Naive thymus-derived CD8-positive, alpha-beta T cell (primary cell): ENCODE measurements at regions of chr16 and their contacts with region 1.

Region 1: DNA sequence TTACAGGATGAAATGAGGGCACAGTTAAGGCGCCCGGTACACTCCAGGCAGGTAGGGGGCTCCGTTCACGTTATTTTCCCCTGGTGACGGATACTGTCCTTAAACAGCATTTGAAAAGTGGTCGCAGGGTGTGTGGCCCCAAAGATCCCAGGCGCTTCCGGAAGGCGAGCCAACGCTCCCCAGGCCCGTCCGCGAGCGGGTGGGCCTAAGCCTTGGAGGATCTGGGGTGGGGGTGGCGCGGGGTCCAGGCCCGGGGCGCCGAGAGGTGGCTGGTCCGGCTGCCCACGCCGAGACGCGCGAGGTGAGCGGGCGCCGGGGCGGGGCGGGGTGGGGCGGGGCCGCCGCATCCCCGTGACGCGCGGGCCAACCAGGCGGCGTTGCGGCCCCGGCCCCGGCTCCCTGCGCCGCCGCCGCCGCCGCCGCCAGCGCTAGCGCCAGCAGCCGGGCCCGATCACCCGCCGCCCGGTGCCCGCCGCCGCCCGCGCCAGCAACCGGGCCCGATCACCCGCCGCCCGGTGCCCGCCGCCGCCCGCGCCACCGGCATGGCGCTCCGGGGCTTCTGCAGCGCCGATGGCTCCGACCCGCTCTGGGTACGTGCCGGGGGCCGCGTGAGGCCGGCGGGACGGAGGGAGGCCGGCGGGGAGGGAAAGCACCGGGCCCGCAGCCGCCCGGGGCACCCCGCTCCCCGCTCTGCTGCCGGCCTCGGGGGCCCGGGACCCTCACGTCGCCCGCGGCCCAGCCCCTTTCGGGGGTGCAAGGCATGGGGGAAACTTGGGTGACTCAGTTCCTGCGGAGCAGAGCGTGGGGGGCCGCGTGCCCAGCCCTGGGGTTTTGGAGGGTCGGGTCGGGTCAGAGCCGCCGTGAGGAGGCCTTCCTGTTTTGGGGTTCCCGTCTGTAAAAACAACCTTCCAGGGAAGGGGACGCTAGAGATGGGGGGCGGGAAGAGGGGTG is at the start of gene ABCC1:
- DNase-seq: peak; percentile 44 to 72 (median 64)
- ATAC-seq: peak; percentile 65 to 69
- H3K4me3 Mint-ChIP-seq: peak within 1 kb of the TSS; percentile 89 to 98 (median 94)
- H3K27ac Mint-ChIP-seq: peak within 1 kb of the TSS; percentile 91 to 99 (median 98)
- H3K4me1 Mint-ChIP-seq: peaks cover 22 to 50% (median 44%) of the 10 kb centered on the region in 4 donors
- H3K27me3 Mint-ChIP-seq: no peaks in the 10 kb centered on the region
- polyA plus RNA-seq, gene ABCC1: 3.7 to 9.0 (median 4.3) TPM

Region 2: DNA sequence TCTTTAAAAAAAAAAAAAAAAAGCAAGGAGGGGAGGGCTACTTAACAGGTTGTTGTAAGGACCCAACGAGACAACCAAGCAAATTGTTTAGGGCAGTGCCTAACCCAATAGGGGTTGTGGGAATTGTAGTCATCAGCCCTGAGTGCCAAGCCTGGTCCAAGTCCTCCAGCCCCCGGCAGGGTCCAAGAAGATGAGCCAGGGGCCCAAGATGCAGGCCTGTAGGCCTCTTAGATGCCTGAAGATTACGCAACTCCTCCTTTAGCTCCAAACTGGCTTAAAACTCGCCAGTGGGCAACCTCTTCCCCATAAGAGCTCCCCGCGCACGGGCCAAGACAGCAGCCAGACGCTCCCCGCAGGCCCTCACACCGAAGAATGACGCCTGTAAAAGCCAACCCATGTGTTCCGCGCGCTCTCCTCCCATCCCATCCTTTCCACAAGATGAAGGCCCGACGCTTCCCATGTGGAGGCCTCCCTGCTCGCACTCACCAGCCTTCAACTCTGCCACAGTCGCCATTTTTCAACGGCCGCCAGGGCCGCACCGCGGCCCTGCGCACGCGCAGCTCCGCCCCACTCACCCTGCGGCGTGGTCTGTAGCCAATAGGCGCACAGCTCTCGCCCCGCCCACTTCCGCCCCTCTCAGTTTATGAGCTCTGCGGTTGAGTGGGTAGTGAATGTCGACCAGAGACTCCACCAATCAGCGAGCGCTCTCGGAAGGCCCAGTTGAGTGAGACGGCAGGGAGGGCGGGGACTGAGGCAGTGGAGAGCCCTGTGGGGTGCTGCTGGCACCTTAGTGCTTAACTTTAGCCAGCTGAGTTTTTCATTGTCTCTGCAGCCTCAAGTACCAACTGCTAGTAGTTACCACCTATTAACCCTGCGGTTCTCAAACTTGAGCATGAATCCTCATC is 61.2 kb before region 1 on chr16 and contains the start of gene CEP20:
- POLR2A ChIA-PET with region 1: interaction called, 14 read pairs
- DNase-seq: peak; percentile 97 to 100 (median 99)
- ATAC-seq: peak; percentile 97 to 98
- H3K4me3 Mint-ChIP-seq: peak within 1 kb of the TSS; percentile 95 to 100 (median 98)
- H3K27ac Mint-ChIP-seq: peak within 1 kb of the TSS; percentile 97 to 100 (median 98)
- H3K4me1 Mint-ChIP-seq: peaks cover 18 to 41% (median 35%) of the 10 kb centered on the region in 4 donors
- H3K27me3 Mint-ChIP-seq: no peaks in the 10 kb centered on the region
- polyA plus RNA-seq, gene CEP20: 26.5 to 32.9 (median 27.9) TPM

Region 3: DNA sequence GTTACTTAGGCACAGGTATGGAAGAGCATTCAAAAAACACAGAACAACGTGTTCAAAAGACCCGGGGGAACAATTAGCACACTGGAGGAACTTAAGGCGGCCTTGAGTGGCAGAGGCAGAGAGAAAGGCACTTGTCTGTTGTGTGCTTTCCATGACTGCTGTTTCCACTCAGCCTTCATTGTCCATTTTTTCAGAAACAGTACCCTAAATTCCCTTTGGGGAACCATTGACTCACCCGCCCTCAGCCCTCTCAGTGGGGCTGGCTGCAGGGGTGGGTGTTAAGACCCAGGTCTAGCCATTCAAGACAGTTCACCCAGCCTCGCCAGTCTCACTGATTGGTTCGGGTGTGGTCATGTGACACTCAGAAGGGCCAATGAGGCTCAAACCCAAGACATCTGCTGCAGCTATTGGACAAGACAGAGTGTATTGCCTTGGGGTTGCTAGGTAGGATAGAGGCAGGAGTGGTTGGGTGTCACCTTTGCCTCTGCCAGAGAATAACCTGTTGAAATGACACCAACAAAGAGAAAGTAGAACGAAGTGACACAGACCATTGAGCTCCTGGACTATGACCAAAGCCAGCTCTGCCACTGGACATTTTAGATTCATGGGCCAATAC is 41.5 kb before region 1 on chr16:
- POLR2A ChIA-PET with region 1: no interaction called
- DNase-seq: peak in 2 of 10 donors; percentile 5 to 13
- ATAC-seq: peak; percentile 63 to 80
- H3K4me3 Mint-ChIP-seq: no peak overlapping the region
- H3K27ac Mint-ChIP-seq: no peak overlapping the region
- H3K4me1 Mint-ChIP-seq: peaks cover 6 to 13% (median 8%) of the 10 kb centered on the region in 4 donors
- H3K27me3 Mint-ChIP-seq: peaks cover 0 to 2% (median 0%) of the 10 kb centered on the region in 5 donors

Region 4: DNA sequence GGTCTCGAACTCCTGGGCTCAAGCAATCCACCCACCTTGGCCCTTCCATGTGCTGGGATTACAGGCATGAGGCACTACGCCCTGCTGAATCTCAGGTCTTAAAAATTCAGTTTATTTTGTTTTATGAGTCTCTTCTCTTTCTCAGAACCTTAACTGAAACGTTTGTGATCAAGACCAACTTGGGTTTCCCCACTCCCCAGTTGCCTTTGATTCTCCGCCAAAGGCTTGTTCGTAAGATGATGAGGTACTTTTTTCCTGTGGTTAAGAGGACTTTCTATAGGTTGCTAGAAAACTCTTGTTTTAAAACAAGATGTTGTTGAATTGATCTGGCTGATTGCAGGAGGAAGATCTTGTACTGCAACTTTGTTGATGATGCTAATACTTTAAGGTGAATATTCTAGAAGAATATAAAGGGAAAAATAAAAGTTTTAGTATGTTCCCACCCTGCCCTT is 11.6 kb after region 1 on chr16:
- POLR2A ChIA-PET with region 1: interaction called, 17 read pairs
- DNase-seq: peak; percentile 40 to 93 (median 82)
- ATAC-seq: peak; percentile 82 to 87
- H3K4me3 Mint-ChIP-seq: peak overlapping the region; percentile 78 to 93 (median 86)
- H3K27ac Mint-ChIP-seq: peak overlapping the region; percentile 91 to 99 (median 97)
- H3K4me1 Mint-ChIP-seq: peaks cover 38 to 86% (median 83%) of the 10 kb centered on the region in 4 donors
- H3K27me3 Mint-ChIP-seq: no peaks in the 10 kb centered on the region

Region 5: DNA sequence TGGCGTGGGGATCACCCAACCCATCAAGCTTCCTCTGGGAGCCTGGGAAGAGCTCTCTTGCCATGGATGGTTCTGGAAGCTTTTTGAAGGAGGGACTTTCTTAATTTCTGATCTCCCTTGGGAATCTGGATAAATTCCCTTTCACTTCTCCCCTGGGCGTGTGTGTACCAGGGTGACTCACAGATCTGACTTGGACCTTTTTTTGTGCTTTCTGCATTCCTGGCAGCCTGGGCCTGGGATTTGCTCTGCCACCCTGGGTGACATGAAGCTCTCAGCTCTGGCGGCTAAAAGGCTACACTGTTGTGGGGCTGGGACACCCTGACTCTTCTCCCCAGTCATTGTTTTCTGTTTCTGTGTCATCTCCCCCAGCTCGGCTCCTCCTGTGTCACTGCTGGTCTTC is 70.0 kb after region 1 on chr16:
- POLR2A ChIA-PET with region 1: no interaction called
- DNase-seq: no peak
- ATAC-seq: no peak
- H3K4me3 Mint-ChIP-seq: no peak overlapping the region
- H3K27ac Mint-ChIP-seq: peak overlapping the region in 2 of 10 donors; percentile 58 to 67
- H3K4me1 Mint-ChIP-seq: peaks cover 12 to 21% (median 15%) of the 10 kb centered on the region in 4 donors
- H3K27me3 Mint-ChIP-seq: no peaks in the 10 kb centered on the region